ENCODE measurements at regions of chr16 and their contacts with region 1.

Region 1: GRCh38 chr16:29784901-29785500 is 5.5 kb upstream of the KIF22 start:
- DNase-seq: peak; percentile 70 to 95
- H3K4me3 ChIP-seq: peak overlapping the region; percentile 4 to 50 (median 33); a peak in 6 of 8 replicates
- H3K27ac ChIP-seq: no peak overlapping the region
- H3K4me1 ChIP-seq: peaks cover 0 to 8% (median 2%) of the 10 kb centered on the region in 4 experiments; a peak in 4 of 7 replicates
- H3K27me3 ChIP-seq: peaks cover 0 to under 1% (median 0%) of the 10 kb centered on the region in 4 experiments; a peak in 2 of 7 replicates
- CTCF ChIP-seq: peak; percentile 85 to 98 (median 97)
- EP300 ChIP-seq: no peak
- POLR2A ChIP-seq: no peak
- RAD21 ChIP-seq: peak; percentile 54 to 68

Region 2: DNA sequence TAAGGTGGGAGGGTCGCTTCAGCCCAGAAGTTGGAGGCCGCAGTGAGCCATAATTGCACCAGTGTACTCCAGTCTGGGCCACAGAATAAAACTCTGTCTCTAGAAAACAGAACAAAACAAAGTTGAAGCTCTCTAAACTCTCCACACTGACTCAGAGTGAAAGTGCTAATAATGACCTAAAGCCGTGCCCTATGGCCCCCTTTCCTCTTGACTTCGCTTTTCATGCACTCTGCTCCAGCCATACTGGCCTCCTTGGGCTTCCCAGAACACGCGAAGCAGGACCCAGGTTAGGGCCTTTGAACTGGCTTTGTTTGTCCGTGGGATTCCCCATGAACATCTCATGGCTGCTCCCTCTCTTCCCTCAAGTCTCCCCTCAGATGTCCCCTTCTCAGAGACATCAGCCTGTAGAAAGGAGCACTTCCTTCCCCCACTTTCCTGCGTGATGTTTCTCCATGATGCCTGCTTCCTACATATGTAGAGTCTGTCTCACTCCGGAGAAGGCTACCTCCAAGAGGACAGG is 140.6 kb before region 1 on chr16:
- CTCF ChIA-PET with region 1: no interaction called
- POLR2A ChIA-PET with region 1: no interaction called
- DNase-seq: no peak
- H3K4me3 ChIP-seq: no peak overlapping the region
- H3K27ac ChIP-seq: no peak overlapping the region
- H3K4me1 ChIP-seq: peaks cover 0 to 2% (median 0%) of the 10 kb centered on the region in 4 experiments; a peak in 1 of 7 replicates
- H3K27me3 ChIP-seq: no peaks in the 10 kb centered on the region
- CTCF ChIP-seq: no peak
- EP300 ChIP-seq: no peak
- POLR2A ChIP-seq: no peak
- RAD21 ChIP-seq: no peak

Region 3: DNA sequence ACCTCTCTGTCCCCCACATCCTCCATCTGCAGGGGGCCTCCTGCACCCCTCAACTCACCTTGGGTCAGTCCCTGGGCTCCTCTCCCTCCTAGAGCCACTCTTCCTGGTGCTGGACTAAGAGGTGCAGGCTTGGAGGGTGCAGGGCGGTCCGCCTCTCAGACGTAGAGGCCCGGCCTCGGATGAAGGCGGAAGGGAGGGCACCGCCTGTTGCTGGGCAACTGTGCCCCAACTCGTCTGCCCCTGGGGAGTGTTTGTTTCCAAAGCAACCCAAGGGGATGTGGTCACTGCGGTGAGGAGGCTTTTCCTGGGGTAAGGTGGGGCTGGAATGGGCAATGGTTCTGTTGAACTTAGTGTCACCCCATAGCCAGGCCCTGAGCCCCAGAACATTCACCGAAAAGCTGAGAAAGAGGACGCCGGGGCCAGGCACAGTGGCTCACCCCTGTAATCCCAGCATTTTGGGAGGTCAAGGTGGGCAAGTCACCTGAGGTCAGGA is 39.1 kb before region 1 on chr16 and contains the start of gene C16orf54:
- CTCF ChIA-PET with region 1: interaction called, 5 read pairs
- POLR2A ChIA-PET with region 1: interaction called, 25 read pairs
- DNase-seq: peak in 1 of 2 experiments; percentile 65
- H3K4me3 ChIP-seq: no peak within 1 kb of the TSS
- H3K27ac ChIP-seq: no peak within 1 kb of the TSS
- H3K4me1 ChIP-seq: peaks cover 0 to 4% (median 2%) of the 10 kb centered on the region in 4 experiments; a peak in 4 of 7 replicates
- H3K27me3 ChIP-seq: no peaks in the 10 kb centered on the region
- CTCF ChIP-seq: no peak
- EP300 ChIP-seq: no peak
- POLR2A ChIP-seq: no peak
- RAD21 ChIP-seq: no peak
- total RNA-seq, gene C16orf54: not detected in 2 replicates

Region 4: GRCh38 chr16:29757950-29758466 is 27.0 kb before region 1 on chr16:
- CTCF ChIA-PET with region 1: interaction called, 29 read pairs
- POLR2A ChIA-PET with region 1: interaction called, 5 read pairs
- DNase-seq: no peak
- H3K4me3 ChIP-seq: no peak overlapping the region
- H3K27ac ChIP-seq: no peak overlapping the region
- H3K4me1 ChIP-seq: no peaks in the 10 kb centered on the region
- H3K27me3 ChIP-seq: no peaks in the 10 kb centered on the region
- CTCF ChIP-seq: no peak
- EP300 ChIP-seq: no peak
- POLR2A ChIP-seq: no peak
- RAD21 ChIP-seq: no peak

Region 5: DNA sequence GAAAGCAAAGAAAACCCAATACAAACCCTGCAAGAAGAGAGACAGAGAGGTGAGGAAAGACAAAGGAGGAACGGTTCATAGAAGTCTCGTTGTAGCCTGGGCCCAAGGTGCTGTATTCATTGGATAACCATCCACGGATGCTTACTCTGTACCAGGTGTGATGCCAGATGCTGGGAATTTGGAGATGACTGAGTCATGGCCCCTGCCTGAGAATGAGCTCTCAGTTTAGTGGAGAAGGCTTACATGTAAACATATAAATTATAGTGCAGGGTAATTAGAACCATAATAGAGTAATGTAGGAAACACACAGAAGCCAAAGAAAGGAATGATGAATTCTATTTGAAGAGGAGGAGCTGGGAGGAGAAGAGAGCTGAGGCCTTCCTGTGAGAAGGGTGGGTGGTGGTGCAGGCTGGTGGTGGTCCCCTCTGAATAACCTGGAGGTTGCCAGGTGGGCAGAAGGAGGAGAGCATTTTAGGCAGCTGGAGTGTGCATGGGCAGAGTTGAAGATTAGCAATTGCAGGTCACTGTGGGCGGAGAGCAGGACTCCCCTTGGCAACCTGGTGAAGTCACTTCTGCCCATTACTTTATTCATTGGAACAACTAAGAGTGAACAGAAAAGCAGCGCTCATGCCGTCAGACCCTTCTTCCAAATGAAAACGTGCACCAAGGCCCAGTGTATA is 14.6 kb before region 1 on chr16:
- CTCF ChIA-PET with region 1: interaction called, 22 read pairs
- POLR2A ChIA-PET with region 1: interaction called, 5 read pairs
- DNase-seq: no peak
- H3K4me3 ChIP-seq: no peak overlapping the region
- H3K27ac ChIP-seq: no peak overlapping the region
- H3K4me1 ChIP-seq: no peaks in the 10 kb centered on the region
- H3K27me3 ChIP-seq: no peaks in the 10 kb centered on the region
- CTCF ChIP-seq: no peak
- EP300 ChIP-seq: no peak
- POLR2A ChIP-seq: no peak
- RAD21 ChIP-seq: no peak

Region 6: DNA sequence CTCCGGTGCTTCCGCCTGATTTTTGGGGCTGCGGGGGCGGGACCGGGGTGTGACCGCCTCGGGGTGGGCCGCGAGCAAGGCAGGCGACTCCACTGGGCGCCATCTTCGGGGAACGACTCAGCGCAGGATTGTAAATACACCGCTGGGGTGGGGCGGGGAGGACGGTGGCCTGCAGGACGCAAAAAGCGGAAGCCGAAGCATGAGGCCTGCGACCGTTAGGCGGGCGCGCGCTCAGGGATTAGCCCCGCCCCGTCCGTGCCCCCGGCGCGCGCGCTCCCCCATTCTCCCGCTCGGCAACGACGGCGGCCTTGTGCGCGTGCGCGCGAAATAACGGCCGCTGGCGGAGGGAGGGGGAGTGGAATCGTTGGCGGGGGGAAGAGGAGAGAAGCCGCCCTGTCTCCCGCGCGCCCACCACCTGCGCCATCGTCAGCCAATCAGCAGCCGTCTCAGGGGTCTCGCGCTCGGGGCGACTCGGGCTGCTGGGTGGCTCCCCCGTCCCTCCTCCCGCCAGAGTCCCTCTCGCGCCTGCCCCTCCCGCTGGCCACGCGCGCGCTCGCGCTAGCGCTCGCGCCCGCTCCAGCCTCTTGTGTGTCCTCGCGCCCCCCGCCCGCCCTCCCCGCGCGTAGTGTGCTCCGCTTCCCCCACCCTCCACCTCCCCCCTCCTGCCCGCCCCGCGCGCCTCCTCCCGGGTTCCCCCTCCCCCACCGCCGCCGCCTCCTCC is 20.5 kb after region 1 on chr16:
- CTCF ChIA-PET with region 1: interaction called, 23 read pairs
- POLR2A ChIA-PET with region 1: interaction called, 58 read pairs
- DNase-seq: peak; percentile 92 to 96
- H3K4me3 ChIP-seq: peak overlapping the region; percentile 54 to 79 (median 72)
- H3K27ac ChIP-seq: peak overlapping the region; percentile 86
- H3K4me1 ChIP-seq: peaks cover 0 to 35% (median 25%) of the 10 kb centered on the region in 4 experiments; a peak in 6 of 7 replicates
- H3K27me3 ChIP-seq: no peaks in the 10 kb centered on the region
- CTCF ChIP-seq: no peak
- EP300 ChIP-seq: 0 out of 3 replicates have a peak, but pooled peaks of 1 of the 2 experiments have one; percentile 6
- POLR2A ChIP-seq: peak in 1 of 2 experiments; percentile 76; a peak in 2 of 3 replicates
- RAD21 ChIP-seq: no peak; a peak in 1 of 4 replicates

Measured in H1 (cell line).